Activated CD4-positive, alpha-beta T cell treated with anti-CD3 and anti-CD28 coated beads, Interleukin-2, amount 10 ng/mL, durations not matched to agents 24 days and 14 days (primary cell): ENCODE measurements at regions of chr1 and their contacts with region 1.

Region 1: GRCh38 chr1:1374929-1375662 is at the start of gene AURKAIP1:
- DNase-seq: peak; percentile 99
- H3K4me3 Mint-ChIP-seq: peak within 1 kb of the TSS; percentile 87
- H3K27ac Mint-ChIP-seq: peak within 1 kb of the TSS; percentile 95
- H3K4me1 Mint-ChIP-seq: peaks cover 22% of the 10 kb centered on the region
- H3K27me3 Mint-ChIP-seq: no peaks in the 10 kb centered on the region
- total RNA-seq, gene AURKAIP1: 142 and 146 TPM in 2 replicates

Region 2: DNA sequence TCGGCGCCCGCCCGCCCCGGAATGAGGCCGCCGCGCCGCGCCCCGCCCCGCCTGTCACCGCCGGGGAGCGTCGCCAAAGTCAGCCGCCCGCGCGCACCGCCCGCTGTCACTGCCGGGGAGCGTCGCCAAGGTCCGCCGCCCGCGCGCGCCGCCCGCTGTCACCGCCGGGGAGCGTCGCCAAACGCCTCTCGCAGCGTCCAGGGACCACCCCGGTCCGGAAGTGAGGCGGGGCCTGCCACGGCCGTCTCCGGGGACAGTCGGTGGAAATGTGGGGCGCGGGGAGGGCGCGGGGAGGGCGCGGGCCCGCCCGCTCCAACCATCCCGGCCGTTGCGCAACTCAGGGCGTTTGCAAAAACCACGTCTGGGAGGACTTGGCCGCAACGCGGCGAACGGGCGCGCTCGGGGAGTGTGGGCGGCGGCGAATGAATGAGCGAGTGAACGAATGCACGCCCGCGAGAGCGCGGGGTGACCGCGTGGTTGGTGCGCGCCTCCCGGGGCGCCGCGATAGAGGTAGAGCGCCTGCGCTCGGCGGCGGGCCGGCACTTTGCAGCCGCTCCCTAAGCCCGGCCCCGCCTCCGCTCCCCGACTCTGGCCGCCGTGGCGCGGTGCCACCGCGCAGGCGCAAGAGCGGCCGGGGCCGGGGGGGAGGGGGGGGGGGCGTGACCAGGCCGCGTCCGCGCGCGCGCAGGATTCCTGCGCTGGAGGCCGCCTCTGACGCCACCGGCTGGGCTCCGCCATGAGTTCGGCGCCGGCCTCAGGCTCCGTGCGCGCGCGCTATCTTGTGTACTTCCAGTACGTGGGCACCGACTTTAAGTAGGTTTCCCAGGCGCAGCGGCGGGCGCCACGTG is 67.0 kb before region 1 on chr1 and contains the starts of genes ACAP3 and PUSL1:
- intact Hi-C with region 1: loop called (anchors 1 kb)
- DNase-seq: peak; percentile 96
- H3K4me3 Mint-ChIP-seq: peak within 1 kb of the TSS; percentile 88
- H3K27ac Mint-ChIP-seq: peak within 1 kb of the TSS; percentile 90
- H3K4me1 Mint-ChIP-seq: peaks cover 18% of the 10 kb centered on the region
- H3K27me3 Mint-ChIP-seq: no peaks in the 10 kb centered on the region
- total RNA-seq, gene ACAP3: 54.1 and 55.7 TPM in 2 replicates
- total RNA-seq, gene PUSL1: 33.4 and 35.2 TPM in 2 replicates

Region 3: DNA sequence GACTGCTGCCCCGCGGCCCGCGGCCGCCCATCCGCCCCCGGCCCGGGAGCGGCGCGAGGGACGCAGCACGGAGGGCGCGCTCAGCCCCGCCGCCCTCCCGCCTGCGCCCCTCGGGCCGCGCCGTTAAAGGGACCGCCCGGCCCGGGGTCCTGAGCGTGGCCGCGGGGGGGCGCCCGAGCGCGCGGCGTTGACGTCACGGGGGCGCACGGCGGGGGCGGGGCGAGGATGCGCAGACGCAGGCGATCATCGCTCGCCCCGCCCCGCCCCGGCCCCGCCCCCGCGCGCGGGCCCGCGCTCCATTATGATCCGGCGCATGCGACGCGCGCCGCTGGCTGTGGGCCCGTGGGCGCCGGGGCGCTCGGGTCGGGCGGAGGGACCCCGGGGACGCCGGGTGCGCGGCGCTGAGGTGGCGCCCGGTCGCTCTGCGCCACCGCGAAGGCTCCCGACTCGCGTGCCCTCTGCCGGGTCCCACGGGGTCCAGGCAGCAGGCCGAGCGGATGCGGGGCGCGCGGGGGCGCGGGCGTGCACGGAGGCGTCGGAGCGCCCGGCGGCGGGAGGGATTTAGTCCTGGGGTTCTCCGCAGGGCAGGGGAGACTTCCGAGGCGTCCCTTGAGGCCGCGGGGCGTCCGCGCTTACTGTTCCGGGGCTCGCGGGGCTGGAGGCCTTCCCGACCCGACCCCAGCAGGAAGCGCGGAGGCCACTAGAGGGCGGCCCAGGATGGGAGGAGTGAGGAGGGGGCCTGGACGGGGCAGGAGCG is 25.7 kb before region 1 on chr1 and contains the start of gene DVL1:
- intact Hi-C with region 1: loop called (anchors 2 kb)
- DNase-seq: peak; percentile 91
- H3K4me3 Mint-ChIP-seq: peak within 1 kb of the TSS; percentile 81
- H3K27ac Mint-ChIP-seq: no peak within 1 kb of the TSS
- H3K4me1 Mint-ChIP-seq: peaks cover 19% of the 10 kb centered on the region
- H3K27me3 Mint-ChIP-seq: peaks cover 20% of the 10 kb centered on the region
- total RNA-seq, gene DVL1: 63.2 and 65.9 TPM in 2 replicates

Region 4: DNA sequence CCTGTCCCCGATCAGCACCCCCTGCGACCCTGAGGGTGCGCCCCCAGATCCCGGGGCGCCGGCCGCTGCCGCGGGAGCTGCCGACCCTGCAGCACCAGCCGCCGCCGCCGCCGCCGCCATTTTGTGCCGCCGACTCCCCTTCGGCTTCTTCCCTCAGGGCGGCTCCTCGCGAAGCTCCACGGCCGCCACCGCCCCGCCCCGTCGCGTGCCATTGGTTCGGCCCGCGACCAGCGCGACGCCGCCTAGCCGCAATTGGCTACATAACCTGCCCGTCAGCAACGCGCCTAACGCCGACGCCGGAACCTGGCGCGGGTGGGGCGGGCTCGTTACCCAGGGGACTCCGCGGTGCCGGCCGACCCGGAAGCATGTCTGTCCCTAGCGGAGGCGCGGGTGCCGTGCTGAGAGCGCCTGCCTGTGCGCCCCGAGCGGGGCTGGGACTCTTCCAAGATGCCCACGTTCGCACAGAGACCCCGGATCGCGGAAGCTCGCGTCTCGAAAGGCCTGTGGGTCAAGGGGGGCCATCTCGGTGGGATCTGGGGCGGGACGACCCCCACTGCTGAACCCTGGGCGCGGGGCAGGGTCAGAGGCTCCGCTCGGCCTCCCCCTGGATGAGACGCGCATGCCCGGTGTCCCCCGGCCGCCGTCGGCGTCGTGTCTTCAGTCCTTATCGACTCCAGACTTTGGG is 24.2 kb after region 1 on chr1 and contains the start of gene CCNL2:
- intact Hi-C with region 1: loop called (anchors 1 kb)
- DNase-seq: peak; percentile 100
- H3K4me3 Mint-ChIP-seq: peak within 1 kb of the TSS; percentile 92
- H3K27ac Mint-ChIP-seq: peak within 1 kb of the TSS; percentile 90
- H3K4me1 Mint-ChIP-seq: peaks cover 42% of the 10 kb centered on the region
- H3K27me3 Mint-ChIP-seq: no peaks in the 10 kb centered on the region
- total RNA-seq, gene CCNL2: 144 and 146 TPM in 2 replicates

Region 5: DNA sequence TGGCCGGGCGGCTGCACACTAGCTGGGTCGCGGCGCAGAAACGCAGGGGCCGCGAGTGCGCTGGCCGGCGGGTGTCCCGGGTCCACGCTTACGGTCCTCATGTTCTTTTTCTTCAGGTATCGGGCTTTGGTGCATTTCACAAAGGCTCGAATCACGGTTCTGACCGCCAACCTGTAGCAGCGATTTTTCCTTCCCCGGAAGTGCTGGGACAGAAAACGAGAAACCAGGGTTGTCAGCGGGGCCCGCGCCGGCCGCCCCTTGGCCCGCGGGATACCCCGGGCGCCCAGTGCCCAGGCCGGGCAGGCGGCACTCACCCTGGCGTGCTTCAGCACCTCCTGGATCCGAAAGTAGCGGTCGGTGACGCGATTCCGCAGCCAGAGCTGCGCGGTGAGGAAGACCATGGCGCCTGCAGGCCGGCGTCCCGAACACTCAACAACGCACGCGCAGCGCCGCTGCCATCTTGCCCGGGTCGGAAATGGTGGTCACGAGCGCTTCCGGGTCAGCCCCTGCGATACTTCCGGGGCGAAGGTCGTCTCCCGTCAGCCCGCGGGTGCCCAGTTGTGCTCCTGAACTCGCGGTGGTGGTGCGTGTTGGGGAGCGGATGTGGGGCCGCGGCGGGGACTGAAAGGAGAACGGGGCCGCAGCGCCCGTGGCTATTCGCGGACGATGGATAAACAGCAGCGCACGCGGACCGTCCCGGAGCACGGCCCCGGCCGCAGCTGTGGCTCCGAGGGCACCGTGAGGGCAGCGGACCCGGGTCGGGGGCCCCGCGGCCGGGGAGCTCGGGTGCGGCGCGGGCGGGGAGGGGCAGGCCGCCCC is 31.9 kb after region 1 on chr1 and contains the start of gene MRPL20:
- intact Hi-C with region 1: loop called (anchors 1 kb)
- DNase-seq: peak; percentile 99
- H3K4me3 Mint-ChIP-seq: peak within 1 kb of the TSS; percentile 96
- H3K27ac Mint-ChIP-seq: peak within 1 kb of the TSS; percentile 95
- H3K4me1 Mint-ChIP-seq: peaks cover 26% of the 10 kb centered on the region
- H3K27me3 Mint-ChIP-seq: no peaks in the 10 kb centered on the region
- total RNA-seq, gene MRPL20: 187 and 194 TPM in 2 replicates

Region 6: GRCh38 chr1:1511533-1512285 is 136.6 kb after region 1 on chr1 and contains the start of gene ATAD3A:
- intact Hi-C with region 1: loop called (anchors 10 kb)
- DNase-seq: peak; percentile 99
- H3K4me3 Mint-ChIP-seq: peak within 1 kb of the TSS; percentile 82
- H3K27ac Mint-ChIP-seq: peak within 1 kb of the TSS; percentile 88
- H3K4me1 Mint-ChIP-seq: peaks cover 8% of the 10 kb centered on the region
- H3K27me3 Mint-ChIP-seq: no peaks in the 10 kb centered on the region
- total RNA-seq, gene ATAD3A: 102 and 107 TPM in 2 replicates

Region 7: GRCh38 chr1:1599030-1599919 is 224.2 kb after region 1 on chr1:
- intact Hi-C with region 1: no loop called
- DNase-seq: peak; percentile 87
- H3K4me3 Mint-ChIP-seq: peak overlapping the region; percentile 85
- H3K27ac Mint-ChIP-seq: peak overlapping the region; percentile 68
- H3K4me1 Mint-ChIP-seq: peaks cover 7% of the 10 kb centered on the region
- H3K27me3 Mint-ChIP-seq: peaks cover 9% of the 10 kb centered on the region

Region 8: GRCh38 chr1:1615256-1616044 is 240.4 kb after region 1 on chr1 and contains the start of gene MIB2:
- intact Hi-C with region 1: loop called (anchors 1 kb)
- DNase-seq: peak; percentile 100
- H3K4me3 Mint-ChIP-seq: peak within 1 kb of the TSS; percentile 96
- H3K27ac Mint-ChIP-seq: peak within 1 kb of the TSS; percentile 98
- H3K4me1 Mint-ChIP-seq: peaks cover 30% of the 10 kb centered on the region
- H3K27me3 Mint-ChIP-seq: no peaks in the 10 kb centered on the region
- total RNA-seq, gene MIB2: 32.7 and 34.1 TPM in 2 replicates

Region 9: GRCh38 chr1:1941868-1942752 is 567.0 kb after region 1 on chr1:
- intact Hi-C with region 1: no loop called
- DNase-seq: no peak
- H3K4me3 Mint-ChIP-seq: no peak overlapping the region
- H3K27ac Mint-ChIP-seq: no peak overlapping the region
- H3K4me1 Mint-ChIP-seq: no peaks in the 10 kb centered on the region
- H3K27me3 Mint-ChIP-seq: no peaks in the 10 kb centered on the region